Prostate gland (tissue), 2 donors: ENCODE measurements at regions of chr1 and their contacts with region 1.

Region 1: DNA sequence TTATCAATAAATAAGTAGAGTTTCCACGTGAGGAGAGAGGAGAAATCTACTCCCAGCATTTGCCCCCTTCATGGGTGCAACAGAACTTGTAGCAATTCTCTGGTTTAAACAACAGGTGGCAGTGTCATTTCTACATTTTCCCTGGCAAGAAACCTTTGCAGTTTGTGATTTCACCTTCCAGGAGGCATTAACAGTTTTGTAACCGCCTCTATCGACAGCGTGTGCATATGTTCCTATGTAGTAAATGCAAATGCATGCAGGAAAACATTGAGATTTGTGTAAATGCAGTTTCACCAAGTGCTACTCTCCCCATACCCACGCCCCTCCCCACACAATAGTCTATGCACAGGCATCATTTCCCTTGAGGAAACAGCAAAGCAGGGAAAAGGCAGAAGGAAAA is 494.7 kb downstream of the SMYD3 start:
- DNase-seq: no peak
- H3K4me3 ChIP-seq: no peak overlapping the region
- H3K27ac ChIP-seq: no peak overlapping the region
- H3K4me1 ChIP-seq: no peaks in the 10 kb centered on the region
- H3K27me3 ChIP-seq: no peaks in the 10 kb centered on the region
- CTCF ChIP-seq: peak in 3 of 4 experiments; percentile 45 to 52 (median 52)
- POLR2A ChIP-seq: no peak

Region 2: DNA sequence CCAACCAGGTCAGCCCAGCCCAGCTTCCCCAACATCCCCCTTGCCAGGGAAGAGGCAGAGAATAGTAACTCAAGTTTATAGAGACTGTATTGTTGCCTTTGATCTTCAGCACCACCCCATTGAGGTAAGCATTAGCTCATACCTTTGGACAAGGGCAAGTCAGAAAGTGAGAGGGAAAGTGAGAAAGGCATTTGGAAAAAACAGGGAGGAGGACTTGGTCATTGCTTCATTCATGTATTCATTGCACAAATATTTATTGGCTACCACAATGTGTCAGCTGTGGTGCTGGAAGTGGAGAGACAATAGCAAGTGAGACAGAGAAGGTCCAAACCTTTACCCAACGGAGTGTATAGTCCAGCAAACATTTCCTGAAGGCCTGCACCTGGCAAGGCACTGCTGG is 296.4 kb before region 1 on chr1:
- intact Hi-C with region 1: no loop called
- DNase-seq: no peak
- H3K4me3 ChIP-seq: no peak overlapping the region
- H3K27ac ChIP-seq: no peak overlapping the region
- H3K4me1 ChIP-seq: no peaks in the 10 kb centered on the region
- H3K27me3 ChIP-seq: no peaks in the 10 kb centered on the region
- CTCF ChIP-seq: no peak
- POLR2A ChIP-seq: no peak

Region 3: GRCh38 chr1:246117066-246117791 is 104.9 kb after region 1 on chr1:
- intact Hi-C with region 1: loop called (anchors 10 kb)
- DNase-seq: no peak
- H3K4me3 ChIP-seq: no peak overlapping the region
- H3K27ac ChIP-seq: no peak overlapping the region
- H3K4me1 ChIP-seq: no peaks in the 10 kb centered on the region
- H3K27me3 ChIP-seq: no peaks in the 10 kb centered on the region
- CTCF ChIP-seq: peak in 2 of 4 experiments; percentile 31 to 35
- POLR2A ChIP-seq: no peak

Region 4: DNA sequence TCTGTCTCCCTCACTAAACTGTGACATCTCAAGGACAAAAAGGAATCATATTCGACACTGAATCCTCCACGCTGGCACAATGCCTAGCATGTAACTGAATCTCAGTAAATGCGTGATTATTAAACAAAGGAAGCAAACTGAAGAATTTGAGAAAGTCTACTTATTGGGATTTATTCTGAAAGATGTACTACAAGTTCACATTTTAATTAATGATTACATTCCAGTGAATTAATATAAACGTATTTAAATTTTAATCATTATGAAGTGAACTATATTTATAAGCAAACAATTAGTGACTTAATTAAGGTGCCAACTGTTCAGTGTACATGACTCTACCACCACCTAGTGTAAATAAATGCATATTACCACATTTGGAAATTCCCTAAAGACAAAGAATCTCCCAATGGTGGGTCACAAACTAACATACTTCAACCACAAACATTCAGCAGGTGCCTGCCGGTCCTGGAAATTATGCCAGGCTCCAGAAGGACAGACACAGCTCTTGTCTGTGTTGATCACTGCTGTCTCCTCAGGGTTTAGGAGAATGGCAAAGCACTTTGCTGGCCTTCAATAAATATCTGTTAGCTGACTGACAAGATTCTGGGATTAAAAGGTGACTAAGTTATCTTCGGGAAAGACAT is 438.4 kb after region 1 on chr1:
- intact Hi-C with region 1: loop called (anchors 5 kb)
- DNase-seq: no peak
- H3K4me3 ChIP-seq: no peak overlapping the region
- H3K27ac ChIP-seq: no peak overlapping the region
- H3K4me1 ChIP-seq: no peaks in the 10 kb centered on the region
- H3K27me3 ChIP-seq: no peaks in the 10 kb centered on the region
- CTCF ChIP-seq: peak in 3 of 4 experiments; percentile 57 to 72 (median 69)
- POLR2A ChIP-seq: no peak

Region 5: DNA sequence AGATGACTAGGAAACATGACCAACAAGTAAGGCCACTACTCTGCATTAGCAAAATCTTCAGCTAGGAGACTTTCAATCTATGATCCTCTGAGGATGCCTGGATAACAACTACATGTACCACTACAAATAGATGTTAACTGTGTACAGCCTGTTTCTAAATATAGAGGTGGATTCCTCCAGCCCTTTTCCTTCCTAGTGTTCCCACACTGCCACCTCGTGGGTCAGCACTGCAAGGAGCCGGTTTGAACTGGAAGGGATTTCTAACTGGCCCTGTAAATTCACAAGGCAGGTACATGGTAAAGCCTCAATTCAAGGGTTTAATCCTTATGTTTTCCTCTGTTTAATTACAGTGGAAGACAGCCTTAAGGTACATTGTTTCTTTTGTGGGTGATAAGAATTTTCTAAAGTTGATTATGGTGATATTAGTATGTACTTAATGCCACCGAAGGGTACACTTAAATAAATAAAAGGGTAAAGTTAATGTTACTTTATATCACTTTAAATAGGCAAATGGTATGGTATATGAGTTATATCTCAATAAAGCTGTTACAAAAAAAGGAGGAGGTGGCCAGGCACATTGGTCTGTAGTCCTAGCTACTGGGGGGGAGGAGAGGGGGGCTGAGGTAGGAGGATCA is 480.4 kb after region 1 on chr1:
- intact Hi-C with region 1: loop called (anchors 5 kb)
- DNase-seq: peak; percentile 56
- H3K4me3 ChIP-seq: no peak overlapping the region
- H3K27ac ChIP-seq: no peak overlapping the region
- H3K4me1 ChIP-seq: no peaks in the 10 kb centered on the region
- H3K27me3 ChIP-seq: no peaks in the 10 kb centered on the region
- CTCF ChIP-seq: peak in 3 of 4 experiments; percentile 72 to 78 (median 73)
- POLR2A ChIP-seq: no peak